ENCODE measurements at regions of chr1 and their contacts with region 1.

Region 1: GRCh38 chr1:21434394-21434793 is 5.5 kb upstream of the NBPF3 start:
- DNase-seq: no peak
- ATAC-seq: no peak
- H3K4me3 ChIP-seq: no peak overlapping the region
- H3K27ac ChIP-seq: no peak overlapping the region
- H3K4me1 ChIP-seq: peaks cover 0 to 17% (median 6%) of the 10 kb centered on the region in 9 donors
- H3K27me3 ChIP-seq: peaks cover 0 to 28% (median 7%) of the 10 kb centered on the region in 7 donors
- CTCF ChIP-seq: no peak

Region 2: DNA sequence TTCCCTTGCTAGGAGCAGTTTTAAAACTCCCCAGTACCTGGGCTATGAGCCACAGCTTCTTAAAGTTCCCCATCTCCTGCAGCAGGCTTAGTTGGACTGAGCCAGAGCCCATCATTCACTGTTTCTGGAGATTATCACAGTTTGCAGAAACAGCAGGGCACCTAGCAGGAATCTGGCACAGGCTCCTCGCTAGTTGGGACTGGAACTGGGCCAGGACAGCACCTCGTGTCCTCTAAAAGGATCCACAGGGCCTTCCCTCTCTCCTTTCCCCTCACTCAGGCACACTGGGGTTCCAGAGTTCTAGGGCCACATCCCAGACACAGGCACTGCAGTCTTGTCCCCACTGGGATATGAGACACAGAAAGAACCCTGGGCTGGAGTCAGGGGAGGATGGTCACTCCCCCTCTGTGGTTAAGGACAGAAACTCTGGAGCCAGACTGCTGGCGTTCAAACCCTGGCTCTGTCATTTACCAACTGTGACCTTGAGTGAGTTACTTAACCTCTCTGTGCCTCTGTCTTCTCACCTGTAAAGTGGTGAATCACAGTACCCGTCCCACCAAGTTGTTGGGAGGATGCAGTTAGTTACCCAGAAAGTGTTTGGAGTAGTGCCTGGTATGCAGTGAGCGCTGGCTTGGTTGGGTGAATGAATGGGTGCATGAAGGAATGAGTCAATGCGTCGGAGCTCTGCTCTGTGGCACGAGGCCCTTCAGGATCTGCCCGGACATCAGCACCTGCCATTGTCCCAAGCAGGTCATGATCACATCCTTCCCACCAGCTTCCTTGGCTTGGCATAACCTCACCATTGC is 125.3 kb before region 1 on chr1:
- intact Hi-C with region 1: no loop called
- DNase-seq: no peak
- ATAC-seq: peak in 4 of 8 donors; percentile 29 to 43 (median 31)
- H3K4me3 ChIP-seq: no peak overlapping the region
- H3K27ac ChIP-seq: peak overlapping the region in 6 of 10 donors; percentile 19 to 56 (median 31)
- H3K4me1 ChIP-seq: peaks cover 3 to 60% (median 45%) of the 10 kb centered on the region in 9 donors
- H3K27me3 ChIP-seq: no peaks in the 10 kb centered on the region
- CTCF ChIP-seq: no peak

Region 3: DNA sequence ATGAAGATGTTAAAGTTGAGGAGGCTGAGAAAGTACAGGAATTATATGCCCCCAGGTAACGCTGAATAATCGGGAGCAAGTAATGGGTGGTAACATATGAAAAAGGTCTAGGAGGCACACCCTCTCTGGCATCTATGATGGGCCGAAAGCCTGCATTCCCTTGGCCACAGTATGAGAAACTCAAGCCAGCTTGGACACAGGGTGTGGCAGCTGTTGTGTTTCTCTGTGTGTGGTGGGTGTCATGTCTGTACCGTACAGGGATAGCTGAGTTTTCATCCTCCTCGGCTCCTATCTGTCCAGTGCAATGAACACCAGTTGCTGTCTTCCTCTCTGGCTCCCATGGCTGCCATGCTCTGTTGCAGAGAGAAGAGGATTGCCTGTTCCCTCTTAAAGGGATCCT is 38.5 kb after region 1 on chr1:
- intact Hi-C with region 1: loop called in 3 of 10 experiments (anchors 5 to 10 kb)
- DNase-seq: no peak
- ATAC-seq: no peak
- H3K4me3 ChIP-seq: no peak overlapping the region
- H3K27ac ChIP-seq: no peak overlapping the region
- H3K4me1 ChIP-seq: no peaks in the 10 kb centered on the region
- H3K27me3 ChIP-seq: no peaks in the 10 kb centered on the region
- CTCF ChIP-seq: no peak

Region 4: GRCh38 chr1:21478974-21479373 is 44.6 kb after region 1 on chr1:
- intact Hi-C with region 1: loop called in 3 of 10 experiments (anchors 5 to 10 kb)
- DNase-seq: no peak
- ATAC-seq: no peak
- H3K4me3 ChIP-seq: no peak overlapping the region
- H3K27ac ChIP-seq: no peak overlapping the region
- H3K4me1 ChIP-seq: no peaks in the 10 kb centered on the region
- H3K27me3 ChIP-seq: no peaks in the 10 kb centered on the region
- CTCF ChIP-seq: no peak

Region 5: DNA sequence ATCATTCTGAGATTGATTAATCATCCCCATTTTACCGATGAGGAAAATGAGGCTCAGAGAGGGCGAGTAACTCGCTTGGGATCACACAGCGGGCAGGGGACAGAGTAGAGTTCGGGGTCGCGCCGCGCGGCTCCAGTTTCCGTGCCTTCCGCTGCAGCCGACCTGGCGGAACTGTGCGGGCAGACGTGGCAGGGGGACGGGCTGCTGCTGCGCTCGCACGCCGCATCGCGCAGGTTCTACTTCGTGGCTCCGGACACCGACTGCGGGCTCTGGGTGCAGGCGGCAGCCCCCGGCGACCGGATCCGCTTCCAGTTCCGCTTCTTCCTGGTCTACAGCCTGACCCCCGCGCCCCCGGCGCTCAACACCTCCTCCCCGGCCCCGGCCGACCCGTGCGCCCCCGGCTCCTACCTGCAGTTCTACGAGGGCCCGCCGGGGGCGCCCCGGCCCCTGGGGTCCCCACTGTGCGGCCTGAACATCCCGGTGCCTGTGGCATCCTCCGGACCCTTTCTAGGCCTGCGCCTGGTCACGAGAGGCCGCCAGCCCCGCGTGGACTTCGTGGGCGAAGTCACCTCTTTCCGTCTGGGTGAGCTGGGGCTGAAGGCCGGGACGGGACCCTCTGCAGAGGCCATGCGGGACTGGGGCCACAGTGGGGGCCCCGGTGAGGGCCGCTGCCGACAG is 380.0 kb after region 1 on chr1:
- intact Hi-C with region 1: no loop called
- DNase-seq: no peak
- ATAC-seq: peak in 6 of 8 donors; percentile 22 to 52 (median 37)
- H3K4me3 ChIP-seq: peak overlapping the region in 9 of 10 donors; percentile 18 to 52 (median 47)
- H3K27ac ChIP-seq: peak overlapping the region in 1 of 10 donors; percentile 27
- H3K4me1 ChIP-seq: peaks cover 0 to 34% (median 6%) of the 10 kb centered on the region in 9 donors
- H3K27me3 ChIP-seq: peaks cover 0 to 17% (median 0%) of the 10 kb centered on the region in 7 donors
- CTCF ChIP-seq: peak; percentile 47 to 67 (median 62)

Measured in heart right ventricle (tissue), 16 donors.